Activated B cell treated with CpG ODN at 0.5 μM for 24 hours (primary cell): ENCODE measurements at regions of chr9 and their contacts with region 1.

Region 1: GRCh38 chr9:99221621-99222415 is at the starts of genes ALG2 and SEC61B:
- DNase-seq: peak; percentile 84
- ATAC-seq: peak; percentile 89
- H3K4me3 Mint-ChIP-seq: peak within 1 kb of the TSS; percentile 97
- H3K27ac Mint-ChIP-seq: peak within 1 kb of the TSS; percentile 100
- H3K4me1 Mint-ChIP-seq: peaks cover 72% of the 10 kb centered on the region
- H3K27me3 Mint-ChIP-seq: no peaks in the 10 kb centered on the region
- CTCF ChIP-seq: no peak
- total RNA-seq, gene ALG2: 51.9 and 54.4 TPM in 2 replicates
- total RNA-seq, gene SEC61B: 200 and 243 TPM in 2 replicates

Region 2: DNA sequence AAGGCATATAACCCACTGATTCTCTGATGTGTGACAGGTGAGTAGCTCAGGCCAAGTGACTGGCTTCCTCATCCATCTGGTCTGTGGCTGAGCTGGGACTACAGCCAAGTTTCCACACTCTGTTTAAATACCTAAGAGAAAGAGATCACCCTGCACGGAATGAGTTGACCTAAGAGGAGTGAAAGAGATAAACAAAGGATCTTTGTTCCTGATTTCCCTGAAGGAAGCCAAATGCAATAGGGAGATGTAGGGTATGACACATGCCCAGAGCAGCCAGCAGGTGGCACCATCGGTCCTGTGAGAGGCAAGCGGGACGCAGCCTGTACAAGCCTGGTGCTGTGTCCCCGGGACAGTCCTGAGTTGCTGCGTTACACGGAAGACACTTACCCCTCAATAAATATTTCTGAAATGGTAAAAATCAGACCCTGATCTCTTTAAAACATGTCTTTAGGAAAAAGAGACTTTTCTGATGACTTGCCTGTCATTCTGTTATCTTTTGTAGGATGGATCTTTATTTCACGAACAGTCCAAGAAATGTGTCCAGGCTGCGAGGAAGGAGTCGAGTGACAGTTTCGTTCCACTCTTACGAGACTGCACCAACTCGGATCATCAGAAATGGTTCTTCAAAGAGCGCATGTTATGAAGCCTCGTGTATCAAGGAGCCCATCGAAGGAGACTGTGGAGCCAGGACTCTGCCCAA is 373.2 kb before region 1 on chr9:
- CTCF ChIA-PET with region 1: no interaction called
- POLR2A ChIA-PET with region 1: no interaction called
- intact Hi-C with region 1: loop called (anchors 5 kb)
- DNase-seq: peak; percentile 59
- ATAC-seq: peak; percentile 97
- H3K4me3 Mint-ChIP-seq: no peak overlapping the region
- H3K27ac Mint-ChIP-seq: no peak overlapping the region
- H3K4me1 Mint-ChIP-seq: no peaks in the 10 kb centered on the region
- H3K27me3 Mint-ChIP-seq: no peaks in the 10 kb centered on the region
- CTCF ChIP-seq: peak; percentile 59

Region 3: GRCh38 chr9:99076483-99077171 is 145.2 kb before region 1 on chr9:
- CTCF ChIA-PET with region 1: no interaction called
- POLR2A ChIA-PET with region 1: no interaction called
- intact Hi-C with region 1: no loop called
- DNase-seq: no peak
- ATAC-seq: peak; percentile 58
- H3K4me3 Mint-ChIP-seq: no peak overlapping the region
- H3K27ac Mint-ChIP-seq: peak overlapping the region; percentile 64
- H3K4me1 Mint-ChIP-seq: peaks cover 14% of the 10 kb centered on the region
- H3K27me3 Mint-ChIP-seq: no peaks in the 10 kb centered on the region
- CTCF ChIP-seq: no peak

Region 4: DNA sequence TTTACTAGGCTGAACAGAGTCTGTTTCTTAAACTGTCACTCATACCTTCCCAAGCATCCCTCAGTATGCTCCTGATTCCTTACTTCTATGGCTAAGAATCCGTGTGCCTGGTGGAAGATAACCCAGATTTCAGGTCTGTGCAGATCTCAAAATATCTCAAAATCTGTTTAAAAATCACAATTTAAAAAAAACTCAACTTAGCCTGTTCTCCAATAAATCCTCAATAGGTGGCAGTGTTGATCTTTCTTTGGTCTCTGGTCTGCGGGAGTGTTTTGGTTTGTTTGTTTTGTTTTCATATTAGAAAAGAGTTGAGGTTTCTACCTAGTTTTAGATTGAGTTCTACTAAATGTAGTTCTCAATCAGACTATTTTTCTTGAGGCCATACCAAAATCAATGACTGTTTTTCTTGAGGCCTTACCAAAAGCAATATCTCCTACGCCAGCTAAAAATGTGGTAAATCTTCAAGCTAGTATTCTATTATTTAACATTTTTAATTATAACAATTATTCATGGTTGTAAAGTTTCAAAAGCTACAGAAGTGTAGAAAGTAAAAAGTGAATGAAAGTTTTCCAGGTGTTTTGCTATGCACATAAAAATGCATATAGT is 59.0 kb before region 1 on chr9:
- CTCF ChIA-PET with region 1: interaction called, 19 read pairs
- POLR2A ChIA-PET with region 1: interaction called, 29 read pairs
- intact Hi-C with region 1: loop called (anchors 2 kb)
- DNase-seq: no peak
- ATAC-seq: peak; percentile 55
- H3K4me3 Mint-ChIP-seq: no peak overlapping the region
- H3K27ac Mint-ChIP-seq: peak overlapping the region; percentile 66
- H3K4me1 Mint-ChIP-seq: peaks cover 45% of the 10 kb centered on the region
- H3K27me3 Mint-ChIP-seq: no peaks in the 10 kb centered on the region
- CTCF ChIP-seq: peak; percentile 22

Region 5: GRCh38 chr9:99211741-99212140 is 10.1 kb before region 1 on chr9:
- CTCF ChIA-PET with region 1: no interaction called
- POLR2A ChIA-PET with region 1: interaction called, 15 read pairs
- intact Hi-C with region 1: loop called (anchors 1 kb)
- DNase-seq: no peak
- ATAC-seq: no peak
- H3K4me3 Mint-ChIP-seq: no peak overlapping the region
- H3K27ac Mint-ChIP-seq: no peak overlapping the region
- H3K4me1 Mint-ChIP-seq: peaks cover 34% of the 10 kb centered on the region
- H3K27me3 Mint-ChIP-seq: no peaks in the 10 kb centered on the region
- CTCF ChIP-seq: no peak

Region 6: DNA sequence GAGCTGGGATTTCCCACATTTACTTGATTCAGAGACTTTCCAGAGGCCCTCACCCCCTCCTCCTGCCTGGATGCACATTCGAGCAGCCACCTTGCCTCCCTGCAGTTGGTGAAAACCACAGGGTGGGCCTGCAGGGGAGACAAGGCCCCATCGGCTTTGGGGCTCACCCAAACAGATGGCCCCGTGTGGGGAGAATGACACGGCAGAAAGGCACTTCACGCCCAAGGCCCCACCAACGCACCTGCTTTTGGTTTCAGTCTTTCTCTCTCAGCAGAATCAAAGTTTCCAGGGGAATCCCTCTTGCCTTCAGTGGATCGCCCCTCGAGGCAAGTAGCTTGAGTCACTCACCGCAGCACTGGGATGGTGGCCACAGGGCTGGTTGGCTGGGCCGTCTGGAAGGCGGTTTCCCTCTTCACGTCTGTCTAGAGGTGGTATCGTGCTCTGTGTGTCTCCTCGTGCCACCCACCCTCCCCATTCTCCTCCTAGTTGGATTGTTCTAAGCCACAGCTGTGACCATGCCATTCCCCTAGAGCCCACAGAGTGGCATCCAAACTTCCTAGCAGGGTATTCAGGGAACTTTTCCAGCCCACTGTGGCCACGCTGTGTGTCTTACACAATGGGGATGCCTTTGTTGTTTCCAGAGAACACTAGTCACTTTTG is 32.1 kb after region 1 on chr9:
- CTCF ChIA-PET with region 1: no interaction called
- POLR2A ChIA-PET with region 1: interaction called, 21 read pairs
- intact Hi-C with region 1: loop called (anchors 1 kb)
- DNase-seq: peak; percentile 73
- ATAC-seq: peak; percentile 87
- H3K4me3 Mint-ChIP-seq: peak overlapping the region; percentile 59
- H3K27ac Mint-ChIP-seq: peak overlapping the region; percentile 94
- H3K4me1 Mint-ChIP-seq: peaks cover 49% of the 10 kb centered on the region
- H3K27me3 Mint-ChIP-seq: no peaks in the 10 kb centered on the region
- CTCF ChIP-seq: no peak

Region 7: GRCh38 chr9:100098887-100099721 is 877.3 kb after region 1 on chr9 and contains the starts of genes ERP44 and INVS:
- CTCF ChIA-PET with region 1: no interaction called
- POLR2A ChIA-PET with region 1: no interaction called
- intact Hi-C with region 1: loop called (anchors 2 kb)
- DNase-seq: peak; percentile 86
- ATAC-seq: peak; percentile 99
- H3K4me3 Mint-ChIP-seq: peak within 1 kb of the TSS; percentile 100
- H3K27ac Mint-ChIP-seq: peak within 1 kb of the TSS; percentile 97
- H3K4me1 Mint-ChIP-seq: peaks cover 42% of the 10 kb centered on the region
- H3K27me3 Mint-ChIP-seq: no peaks in the 10 kb centered on the region
- CTCF ChIP-seq: no peak
- total RNA-seq, gene ERP44: 14.8 and 16.5 TPM in 2 replicates
- total RNA-seq, gene INVS: 26.7 and 34.0 TPM in 2 replicates